Mammary epithelial cell (primary cell): ENCODE measurements at regions of chr17 and their contacts with region 1.

Region 1: GRCh38 chr17:8727065-8727511 is 17.5 kb downstream of the CCDC42 start:
- DNase-seq: peak; percentile 67
- H3K4me3 ChIP-seq: no peak overlapping the region
- H3K27ac ChIP-seq: no peak overlapping the region
- H3K4me1 ChIP-seq: peaks cover 13% of the 10 kb centered on the region
- H3K27me3 ChIP-seq: no peaks in the 10 kb centered on the region
- CTCF ChIP-seq: no peak

Region 2: DNA sequence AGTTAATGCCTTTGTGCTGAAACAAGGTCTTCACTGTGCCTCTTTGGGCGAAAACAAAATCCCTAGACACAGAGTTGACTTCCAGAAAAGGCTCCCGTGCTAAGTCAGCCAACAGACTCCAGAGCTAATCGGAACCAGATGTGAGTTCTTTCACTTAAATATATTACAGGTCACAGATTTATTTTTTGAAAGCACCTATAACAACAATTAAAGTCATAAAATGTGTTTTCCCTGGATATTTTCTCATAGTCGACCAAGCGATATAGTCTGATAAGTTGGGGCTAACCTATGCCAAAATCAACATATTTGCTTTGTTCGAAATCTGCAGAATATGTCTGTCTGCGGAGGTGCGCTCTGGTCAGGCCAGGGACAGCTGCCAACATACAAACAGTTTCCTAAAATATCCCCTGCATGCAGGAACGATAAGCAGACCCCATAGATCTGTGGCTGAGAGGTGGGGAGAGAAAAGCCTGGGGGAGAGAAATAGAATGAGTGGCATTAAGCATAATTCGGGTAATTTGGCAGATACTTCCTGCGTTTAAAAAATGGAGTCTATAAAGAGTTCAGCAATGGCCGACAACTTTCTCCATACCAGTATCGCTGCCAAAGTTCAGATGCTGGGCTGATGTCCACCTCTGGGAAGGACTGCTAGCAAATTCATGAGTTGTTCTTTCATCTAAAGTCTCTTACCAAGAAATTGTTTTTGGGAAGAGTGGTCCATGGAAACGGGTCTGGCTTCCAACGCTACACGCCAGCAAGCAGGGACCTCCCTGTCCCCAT is 45.7 kb before region 1 on chr17:
- CTCF ChIA-PET with region 1: no interaction called
- dilution Hi-C with region 1: loop called (anchors 5 kb)
- in situ Hi-C with region 1: no loop called
- intact Hi-C with region 1: no loop called
- DNase-seq: no peak
- H3K4me3 ChIP-seq: no peak overlapping the region
- H3K27ac ChIP-seq: no peak overlapping the region
- H3K4me1 ChIP-seq: no peaks in the 10 kb centered on the region
- H3K27me3 ChIP-seq: no peaks in the 10 kb centered on the region
- CTCF ChIP-seq: no peak

Region 3: DNA sequence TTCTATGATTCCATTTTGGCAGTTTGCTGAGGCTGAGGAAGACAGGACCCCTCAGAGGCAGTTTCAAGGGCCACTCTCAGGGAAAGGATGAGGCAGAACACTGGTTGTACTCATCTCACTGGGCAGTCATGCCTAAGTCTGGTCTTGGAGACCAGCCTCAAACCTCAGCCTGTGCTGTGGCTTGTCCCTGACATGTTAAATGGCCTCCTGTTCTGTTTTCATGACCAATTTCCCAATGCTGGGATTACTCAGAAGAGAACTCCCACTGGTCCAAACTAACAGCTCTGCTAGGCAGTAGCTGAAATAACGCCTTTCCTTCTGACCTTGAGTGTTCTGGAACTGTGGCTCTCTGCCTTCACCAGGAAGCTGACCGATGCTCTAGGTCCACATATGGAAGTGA is 39.6 kb after region 1 on chr17:
- CTCF ChIA-PET with region 1: no interaction called
- dilution Hi-C with region 1: loop called (anchors 5 kb)
- in situ Hi-C with region 1: no loop called
- intact Hi-C with region 1: no loop called
- DNase-seq: peak; percentile 74
- H3K4me3 ChIP-seq: no peak overlapping the region
- H3K27ac ChIP-seq: no peak overlapping the region
- H3K4me1 ChIP-seq: peaks cover 4% of the 10 kb centered on the region
- H3K27me3 ChIP-seq: peaks cover 3% of the 10 kb centered on the region
- CTCF ChIP-seq: no peak